ENCODE measurements at regions of chr6 and their contacts with region 1.

Region 1: DNA sequence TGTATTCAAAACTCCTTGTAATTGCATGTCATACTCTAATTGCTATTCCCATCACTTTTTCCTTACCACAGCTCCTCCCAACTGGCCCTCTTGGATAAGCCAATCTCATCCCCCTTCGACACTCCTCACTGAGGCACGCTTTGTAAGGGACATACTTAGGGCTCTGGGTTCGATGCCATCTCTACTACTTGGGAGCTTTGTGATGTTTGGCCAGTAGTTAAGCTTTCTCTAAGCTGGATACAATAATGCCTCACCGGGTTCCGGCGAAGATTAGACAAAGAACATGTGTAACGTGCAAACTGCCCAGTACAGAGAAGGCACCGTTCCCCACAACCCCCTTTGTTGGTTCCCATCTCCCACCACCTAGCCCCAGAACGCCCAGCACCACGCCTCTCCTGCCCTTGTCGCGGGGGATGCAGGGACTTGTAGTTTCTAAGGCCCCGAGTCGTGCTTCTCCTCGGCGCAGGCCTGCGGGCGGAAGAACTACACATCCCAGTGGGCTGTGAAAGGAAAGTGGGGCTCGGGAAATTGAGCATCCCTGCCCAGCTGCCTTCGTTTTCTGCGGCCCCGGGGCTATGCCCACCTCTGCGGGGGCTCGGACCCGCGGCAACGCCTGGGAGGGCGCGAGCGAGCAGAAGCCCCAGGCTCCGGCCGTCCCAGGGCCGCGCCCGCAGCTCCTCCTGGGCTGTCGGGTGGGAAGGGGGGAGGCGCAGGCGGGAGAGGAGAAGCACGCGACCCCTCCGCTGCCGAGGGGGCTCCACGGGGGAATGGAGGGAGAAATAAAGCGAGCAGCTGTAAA is 1.1 kb upstream of the ZDHHC14 start:
- DNase-seq: peak; percentile 89 to 97
- H3K4me3 ChIP-seq: peak overlapping the region; percentile 99
- CTCF ChIP-seq: no peak
- POLR2A ChIP-seq: no peak

Region 2: DNA sequence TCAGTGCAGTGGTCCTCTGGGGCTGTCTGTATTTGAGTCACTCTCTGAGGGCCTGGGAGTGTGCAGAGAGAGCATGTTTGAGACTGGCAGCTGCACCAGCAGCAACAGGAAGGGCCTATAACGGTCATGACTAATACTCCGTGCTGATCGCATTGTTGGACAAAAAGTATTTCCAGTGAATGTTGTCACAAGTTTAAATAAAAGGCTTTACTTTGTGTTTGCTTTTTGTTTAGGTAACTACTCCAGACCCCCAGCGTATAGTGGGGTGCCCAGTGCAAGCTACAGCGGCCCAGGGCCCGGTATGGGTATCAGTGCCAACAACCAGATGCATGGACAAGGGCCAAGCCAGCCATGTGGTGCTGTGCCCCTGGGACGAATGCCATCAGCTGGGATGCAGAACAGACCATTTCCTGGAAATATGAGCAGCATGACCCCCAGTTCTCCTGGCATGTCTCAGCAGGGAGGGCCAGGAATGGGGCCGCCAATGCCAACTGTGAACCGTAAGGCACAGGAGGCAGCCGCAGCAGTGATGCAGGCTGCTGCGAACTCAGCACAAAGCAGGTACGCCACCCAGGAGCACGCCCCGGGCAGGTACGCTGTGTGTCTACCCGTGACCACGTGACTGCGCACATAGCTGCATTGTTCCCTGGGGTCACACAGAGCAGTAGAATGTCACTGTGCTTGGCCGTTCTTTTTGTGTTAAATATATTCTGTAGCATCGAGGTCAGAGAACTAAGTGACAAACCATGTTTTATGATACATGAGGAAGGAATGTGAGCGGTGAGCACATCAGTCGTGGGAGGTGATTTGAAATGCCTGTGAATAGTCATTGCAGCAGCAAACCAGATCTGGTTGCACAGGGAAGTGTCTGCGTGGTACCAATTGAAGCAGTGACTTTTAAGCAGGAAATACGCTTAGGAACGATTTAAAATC is 231.2 kb before region 1 on chr6:
- intact Hi-C with region 1: no loop called
- DNase-seq: no peak
- H3K4me3 ChIP-seq: no peak overlapping the region
- CTCF ChIP-seq: no peak
- POLR2A ChIP-seq: no peak

Region 3: DNA sequence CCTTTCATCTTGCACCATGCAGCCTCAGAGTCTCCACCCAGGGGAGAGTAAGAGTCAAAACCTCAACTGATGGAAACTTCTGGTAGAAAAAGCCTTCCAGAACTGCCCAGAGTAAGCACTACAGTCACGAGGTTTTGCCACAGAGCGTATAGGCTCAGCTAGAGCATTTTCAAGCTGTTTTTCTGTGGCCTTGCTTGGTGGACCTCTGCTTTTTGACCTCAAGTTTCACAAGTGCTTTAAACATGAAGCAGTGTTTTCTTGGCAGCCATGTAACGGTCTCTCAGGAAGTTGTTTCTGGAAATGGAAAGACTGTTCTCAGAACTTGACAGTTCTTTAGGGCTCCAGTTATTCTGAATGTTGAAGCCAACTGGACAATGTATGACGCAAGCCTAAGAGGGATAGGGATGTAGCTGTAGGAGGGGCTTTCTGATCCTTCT is 147.6 kb after region 1 on chr6:
- intact Hi-C with region 1: loop called (anchors 10 kb)
- DNase-seq: peak in 1 of 2 donors; percentile 53
- H3K4me3 ChIP-seq: no peak overlapping the region
- CTCF ChIP-seq: no peak
- POLR2A ChIP-seq: no peak